ENCODE measurements at regions of chr3 and their contacts with region 1.

Region 1: DNA sequence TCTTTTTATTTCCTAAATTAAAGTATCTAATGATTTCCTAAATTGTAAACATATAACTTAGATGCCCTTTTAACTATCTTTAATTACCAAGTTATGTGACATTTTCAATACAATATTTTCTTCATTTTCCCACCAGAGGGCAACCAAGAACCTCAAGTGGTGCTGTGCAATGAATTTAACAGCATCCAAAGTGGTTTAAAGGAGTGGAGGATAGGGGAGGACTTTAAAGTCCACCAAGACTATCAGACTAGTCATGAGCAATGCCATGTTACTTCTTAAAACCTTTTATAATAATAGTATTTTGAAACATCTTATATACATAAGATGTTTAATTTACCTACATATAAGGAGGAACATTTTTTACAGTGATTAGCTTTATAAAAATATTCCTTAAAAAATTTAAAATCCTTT is 74.4 kb downstream of the DLG1 start:
- DNase-seq: no peak
- ATAC-seq: peak; percentile 69
- H3K4me3 Mint-ChIP-seq: no peak overlapping the region
- H3K27ac Mint-ChIP-seq: no peak overlapping the region
- H3K4me1 Mint-ChIP-seq: peaks cover 28% of the 10 kb centered on the region
- H3K27me3 Mint-ChIP-seq: no peaks in the 10 kb centered on the region
- CTCF ChIP-seq: peak; percentile 66

Region 2: GRCh38 chr3:197103766-197104165 is 120.3 kb before region 1 on chr3:
- CTCF ChIA-PET with region 1: no interaction called
- POLR2A ChIA-PET with region 1: no interaction called
- intact Hi-C with region 1: no loop called
- DNase-seq: no peak
- ATAC-seq: no peak
- H3K4me3 Mint-ChIP-seq: no peak overlapping the region
- H3K27ac Mint-ChIP-seq: no peak overlapping the region
- H3K4me1 Mint-ChIP-seq: no peaks in the 10 kb centered on the region
- H3K27me3 Mint-ChIP-seq: no peaks in the 10 kb centered on the region
- CTCF ChIP-seq: no peak

Region 3: DNA sequence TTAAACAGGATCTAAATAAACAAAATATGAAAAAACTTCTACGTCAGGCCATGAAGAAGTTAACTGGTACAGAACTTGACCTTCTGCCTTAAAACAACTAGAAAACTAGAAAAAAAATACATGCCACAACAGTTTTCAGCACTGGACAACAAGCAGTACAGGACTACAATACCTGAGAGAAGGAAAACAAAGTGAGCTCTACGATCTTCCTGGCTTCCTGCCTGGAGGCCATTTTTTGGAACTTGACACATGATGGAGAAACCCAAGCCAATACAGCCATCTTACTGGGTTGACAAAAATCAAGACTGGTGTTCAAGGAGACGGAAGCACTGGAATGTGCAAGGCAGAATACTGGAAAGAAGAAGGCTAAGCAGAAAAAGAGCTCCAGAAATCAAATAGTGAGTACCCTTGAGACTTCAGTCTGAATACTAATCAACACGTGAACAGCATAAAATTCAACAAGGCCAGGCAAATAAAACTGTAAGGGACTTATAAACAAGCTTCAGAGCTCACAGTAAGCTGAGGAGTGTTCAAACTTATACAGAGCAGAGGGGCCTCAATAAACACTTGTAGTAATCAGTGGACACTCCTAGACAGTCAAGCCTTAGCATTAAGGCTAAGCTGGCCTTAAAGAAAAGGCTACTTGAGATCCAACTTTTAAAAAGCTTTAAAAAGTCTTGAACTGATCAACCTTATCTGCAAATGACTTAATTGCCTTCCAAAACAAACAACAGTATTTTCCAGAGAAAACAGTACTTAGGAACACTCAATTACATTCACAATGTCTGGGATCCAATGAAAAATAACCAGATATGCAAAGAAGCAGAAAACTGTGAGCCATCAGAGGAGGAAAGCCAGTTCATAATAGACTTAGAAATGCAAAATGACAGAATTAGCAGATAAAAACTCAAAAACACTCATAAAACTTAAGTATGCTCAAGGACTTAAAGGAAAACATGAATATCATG is 11.2 kb after region 1 on chr3:
- CTCF ChIA-PET with region 1: interaction called, 17 read pairs
- POLR2A ChIA-PET with region 1: interaction called, 4 read pairs
- intact Hi-C with region 1: no loop called
- DNase-seq: no peak
- ATAC-seq: no peak
- H3K4me3 Mint-ChIP-seq: no peak overlapping the region
- H3K27ac Mint-ChIP-seq: no peak overlapping the region
- H3K4me1 Mint-ChIP-seq: peaks cover 42% of the 10 kb centered on the region
- H3K27me3 Mint-ChIP-seq: no peaks in the 10 kb centered on the region
- CTCF ChIP-seq: no peak

Region 4: GRCh38 chr3:197466586-197467399 is 242.8 kb after region 1 on chr3:
- CTCF ChIA-PET with region 1: interaction called, 3 read pairs
- POLR2A ChIA-PET with region 1: no interaction called
- intact Hi-C with region 1: loop called (anchors 10 kb)
- DNase-seq: peak; percentile 28
- ATAC-seq: peak; percentile 26
- H3K4me3 Mint-ChIP-seq: no peak overlapping the region
- H3K27ac Mint-ChIP-seq: peak overlapping the region; percentile 43
- H3K4me1 Mint-ChIP-seq: peaks cover 34% of the 10 kb centered on the region
- H3K27me3 Mint-ChIP-seq: peaks cover 34% of the 10 kb centered on the region
- CTCF ChIP-seq: no peak

Region 5: GRCh38 chr3:197501879-197502620 is 278.0 kb after region 1 on chr3:
- CTCF ChIA-PET with region 1: interaction called, 19 read pairs
- POLR2A ChIA-PET with region 1: no interaction called
- intact Hi-C with region 1: no loop called
- DNase-seq: peak; percentile 74
- ATAC-seq: peak; percentile 88
- H3K4me3 Mint-ChIP-seq: no peak overlapping the region
- H3K27ac Mint-ChIP-seq: no peak overlapping the region
- H3K4me1 Mint-ChIP-seq: no peaks in the 10 kb centered on the region
- H3K27me3 Mint-ChIP-seq: no peaks in the 10 kb centered on the region
- CTCF ChIP-seq: peak; percentile 67

Measured in activated CD8-positive, alpha-beta T cell treated with anti-CD3 and anti-CD28 coated beads for 36 hours (primary cell).